H1 (cell line): ENCODE measurements at regions of chr4 and their contacts with region 1.

Region 1: GRCh38 chr4:10403633-10404445 is 53.4 kb downstream of the ZNF518B start:
- DNase-seq: peak in 1 of 2 experiments; percentile 1
- H3K4me3 ChIP-seq: no peak overlapping the region
- H3K27ac ChIP-seq: no peak overlapping the region
- H3K4me1 ChIP-seq: no peaks in the 10 kb centered on the region; a peak in 1 of 7 replicates
- H3K27me3 ChIP-seq: no peaks in the 10 kb centered on the region
- CTCF ChIP-seq: peak in 2 of 3 experiments; percentile 54 to 55; a peak in 2 of 4 replicates
- EP300 ChIP-seq: no peak
- POLR2A ChIP-seq: no peak
- RAD21 ChIP-seq: peak; percentile 81 to 86

Region 2: GRCh38 chr4:10157478-10158332 is 246.1 kb before region 1 on chr4:
- CTCF ChIA-PET with region 1: interaction called, 264 read pairs
- POLR2A ChIA-PET with region 1: no interaction called
- DNase-seq: peak; percentile 39 to 62
- H3K4me3 ChIP-seq: no peak overlapping the region
- H3K27ac ChIP-seq: no peak overlapping the region
- H3K4me1 ChIP-seq: peaks cover 0 to 5% (median 0%) of the 10 kb centered on the region in 4 experiments; a peak in 1 of 7 replicates
- H3K27me3 ChIP-seq: no peaks in the 10 kb centered on the region; a peak in 4 of 7 replicates
- CTCF ChIP-seq: peak; percentile 52 to 86 (median 73)
- EP300 ChIP-seq: no peak
- POLR2A ChIP-seq: no peak
- RAD21 ChIP-seq: peak; percentile 86 to 88

Region 3: GRCh38 chr4:10173037-10173753 is 230.6 kb before region 1 on chr4:
- CTCF ChIA-PET with region 1: interaction called, 25 read pairs
- POLR2A ChIA-PET with region 1: no interaction called
- DNase-seq: no peak
- H3K4me3 ChIP-seq: no peak overlapping the region
- H3K27ac ChIP-seq: no peak overlapping the region
- H3K4me1 ChIP-seq: no peaks in the 10 kb centered on the region; a peak in 2 of 7 replicates
- H3K27me3 ChIP-seq: no peaks in the 10 kb centered on the region
- CTCF ChIP-seq: peak in 1 of 3 experiments; percentile 16; a peak in 1 of 4 replicates
- EP300 ChIP-seq: no peak
- POLR2A ChIP-seq: no peak
- RAD21 ChIP-seq: 0 out of 4 replicates have a peak, but pooled peaks of 1 of the 2 experiments have one; percentile 9

Region 4: DNA sequence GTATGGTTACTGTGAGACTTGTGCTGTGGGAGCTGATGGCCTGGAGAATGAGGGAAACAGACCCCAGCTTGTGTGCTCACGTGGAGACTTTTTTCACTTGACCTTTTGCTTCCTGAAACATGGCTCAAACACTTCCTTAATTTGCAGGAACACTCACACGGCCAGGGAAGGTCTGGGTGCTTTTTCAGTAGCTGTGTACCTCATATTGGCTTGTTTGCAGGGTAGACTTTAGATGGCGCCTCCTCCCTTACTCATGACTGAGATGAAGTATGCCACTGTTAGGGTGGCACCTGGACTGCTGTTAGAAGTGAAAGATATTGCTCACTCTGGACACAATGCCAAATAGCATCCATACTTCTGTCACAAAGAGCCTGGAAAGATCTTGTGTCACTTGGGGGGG is 211.5 kb before region 1 on chr4:
- CTCF ChIA-PET with region 1: interaction called, 25 read pairs
- POLR2A ChIA-PET with region 1: no interaction called
- DNase-seq: no peak
- H3K4me3 ChIP-seq: no peak overlapping the region
- H3K27ac ChIP-seq: no peak overlapping the region
- H3K4me1 ChIP-seq: no peaks in the 10 kb centered on the region
- H3K27me3 ChIP-seq: no peaks in the 10 kb centered on the region
- CTCF ChIP-seq: peak in 2 of 3 experiments; percentile 31 to 43; a peak in 2 of 4 replicates
- EP300 ChIP-seq: no peak
- POLR2A ChIP-seq: no peak
- RAD21 ChIP-seq: peak; percentile 54 to 68

Region 5: DNA sequence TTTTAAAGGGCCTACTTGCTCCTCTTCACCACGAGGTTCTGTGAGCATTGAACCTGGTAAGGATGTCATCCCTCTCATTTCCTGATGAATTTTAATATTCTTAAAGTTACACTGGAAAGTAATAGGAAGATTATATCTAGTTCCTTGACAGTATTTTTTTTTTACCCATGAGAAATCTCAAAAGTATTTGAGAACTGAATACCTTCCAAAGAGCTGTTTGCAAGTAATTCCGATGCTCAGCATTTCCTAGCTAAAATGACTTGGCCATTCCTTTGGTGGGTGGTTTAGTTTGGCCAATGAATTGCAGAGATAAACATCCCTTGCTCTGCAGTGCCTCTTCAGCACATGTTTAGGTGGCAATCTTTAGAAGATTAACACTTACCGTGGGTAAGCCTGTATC is 177.1 kb before region 1 on chr4:
- CTCF ChIA-PET with region 1: no interaction called
- POLR2A ChIA-PET with region 1: no interaction called
- DNase-seq: no peak
- H3K4me3 ChIP-seq: no peak overlapping the region
- H3K27ac ChIP-seq: no peak overlapping the region
- H3K4me1 ChIP-seq: no peaks in the 10 kb centered on the region
- H3K27me3 ChIP-seq: no peaks in the 10 kb centered on the region
- CTCF ChIP-seq: no peak
- EP300 ChIP-seq: no peak
- POLR2A ChIP-seq: no peak
- RAD21 ChIP-seq: no peak

Region 6: DNA sequence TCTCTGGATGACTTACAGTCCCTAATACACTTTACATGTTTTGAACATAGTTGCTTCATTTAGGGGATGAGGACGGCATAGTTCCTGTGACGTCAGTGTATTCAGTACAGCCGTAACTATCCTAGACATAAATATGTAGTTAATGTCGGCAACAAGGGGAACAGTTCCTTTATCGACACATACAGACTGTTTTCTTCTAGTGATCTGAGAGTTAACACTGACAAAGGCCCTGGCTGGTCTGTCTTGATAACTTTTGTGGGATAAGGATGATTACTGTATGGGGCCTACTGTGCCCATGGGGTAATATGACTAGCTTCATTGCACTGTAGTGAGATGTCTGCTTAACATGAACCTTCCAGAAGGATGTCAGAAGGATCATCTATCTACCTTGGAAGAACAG is 77.8 kb before region 1 on chr4:
- CTCF ChIA-PET with region 1: no interaction called
- POLR2A ChIA-PET with region 1: no interaction called
- DNase-seq: no peak
- H3K4me3 ChIP-seq: no peak overlapping the region
- H3K27ac ChIP-seq: no peak overlapping the region
- H3K4me1 ChIP-seq: no peaks in the 10 kb centered on the region
- H3K27me3 ChIP-seq: no peaks in the 10 kb centered on the region
- CTCF ChIP-seq: no peak
- EP300 ChIP-seq: no peak
- POLR2A ChIP-seq: no peak
- RAD21 ChIP-seq: no peak

Region 7: DNA sequence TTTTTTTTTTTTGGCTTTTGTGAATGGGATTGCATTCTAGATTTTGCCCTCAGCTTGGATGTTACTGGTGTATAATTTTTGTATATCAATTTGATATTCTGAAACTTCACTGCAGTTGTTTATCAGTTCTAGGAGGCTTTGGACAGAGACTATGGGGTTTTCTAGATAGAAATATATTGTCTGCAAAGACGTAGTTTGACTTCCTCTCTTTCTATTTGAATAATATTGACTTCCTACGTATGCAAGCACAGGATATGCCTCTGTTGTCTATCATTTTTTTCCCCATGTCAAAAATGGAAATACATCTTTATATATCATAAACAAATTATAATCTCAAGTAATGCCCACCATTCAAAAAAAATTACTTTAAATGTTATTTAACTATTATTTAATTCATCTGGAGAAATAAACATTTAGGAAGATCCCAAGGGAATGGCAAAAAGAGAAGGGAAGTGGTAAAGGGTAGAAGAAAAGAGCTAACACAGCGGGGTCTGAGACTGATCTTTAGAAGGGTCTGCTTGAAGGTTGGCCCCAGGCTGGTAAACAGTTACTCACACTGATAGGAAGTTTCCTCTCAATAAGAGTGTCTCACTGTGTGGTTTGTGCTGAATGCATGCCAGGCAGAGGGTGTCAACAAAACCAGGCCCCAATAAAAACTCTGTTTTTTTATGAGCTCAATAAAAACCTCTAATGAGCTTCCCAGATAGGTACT is 17.7 kb after region 1 on chr4:
- CTCF ChIA-PET with region 1: interaction called, 13 read pairs
- POLR2A ChIA-PET with region 1: no interaction called
- DNase-seq: no peak
- H3K4me3 ChIP-seq: no peak overlapping the region
- H3K27ac ChIP-seq: no peak overlapping the region
- H3K4me1 ChIP-seq: no peaks in the 10 kb centered on the region
- H3K27me3 ChIP-seq: no peaks in the 10 kb centered on the region
- CTCF ChIP-seq: no peak
- EP300 ChIP-seq: no peak
- POLR2A ChIP-seq: no peak
- RAD21 ChIP-seq: no peak

Region 8: GRCh38 chr4:10535912-10536311 is 132.1 kb after region 1 on chr4:
- CTCF ChIA-PET with region 1: interaction called, 27 read pairs
- POLR2A ChIA-PET with region 1: no interaction called
- DNase-seq: no peak
- H3K4me3 ChIP-seq: no peak overlapping the region
- H3K27ac ChIP-seq: no peak overlapping the region
- H3K4me1 ChIP-seq: peaks cover 0 to 3% (median 2%) of the 10 kb centered on the region in 4 experiments; a peak in 3 of 7 replicates
- H3K27me3 ChIP-seq: no peaks in the 10 kb centered on the region
- CTCF ChIP-seq: no peak
- EP300 ChIP-seq: no peak
- POLR2A ChIP-seq: no peak
- RAD21 ChIP-seq: no peak

Region 9: DNA sequence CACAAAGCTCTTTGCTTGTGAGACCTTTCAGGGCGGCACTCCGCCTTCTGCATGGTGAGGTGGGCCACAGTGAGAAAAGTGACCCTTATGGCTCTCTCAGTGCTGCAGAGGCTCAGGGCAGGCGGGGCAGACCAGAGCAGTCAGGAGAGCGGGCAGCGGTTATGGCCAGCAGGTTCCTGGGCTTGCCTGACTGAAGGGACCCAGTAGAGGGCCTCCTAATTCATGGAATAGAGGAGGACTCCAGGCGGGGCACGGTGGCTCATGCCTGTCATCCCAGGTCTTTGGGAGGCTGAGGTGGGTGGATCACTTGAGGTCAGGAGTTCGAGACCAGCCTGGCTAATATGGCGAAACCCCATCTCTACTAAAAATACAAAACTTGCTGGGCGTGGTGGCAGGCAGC is 189.3 kb after region 1 on chr4:
- CTCF ChIA-PET with region 1: no interaction called
- POLR2A ChIA-PET with region 1: no interaction called
- DNase-seq: no peak
- H3K4me3 ChIP-seq: no peak overlapping the region
- H3K27ac ChIP-seq: no peak overlapping the region
- H3K4me1 ChIP-seq: peaks cover 0 to 10% (median under 1%) of the 10 kb centered on the region in 4 experiments; a peak in 2 of 7 replicates
- H3K27me3 ChIP-seq: 0 out of 7 replicates have a peak, but pooled peaks cover 0 to 2% (median 0%) of the 10 kb centered on the region in 4 experiments
- CTCF ChIP-seq: peak; percentile 13 to 32 (median 19); a peak in 3 of 4 replicates
- EP300 ChIP-seq: no peak
- POLR2A ChIP-seq: no peak
- RAD21 ChIP-seq: peak; percentile 46 to 64; a peak in 3 of 4 replicates

Region 10: GRCh38 chr4:10963958-10964703 is 560.3 kb after region 1 on chr4:
- CTCF ChIA-PET with region 1: no interaction called
- POLR2A ChIA-PET with region 1: no interaction called
- DNase-seq: no peak
- H3K4me3 ChIP-seq: 0 out of 8 replicates have a peak overlapping the region, but pooled peaks of 1 of the 4 experiments have one; percentile 0
- H3K27ac ChIP-seq: no peak overlapping the region
- H3K4me1 ChIP-seq: peaks cover 9 to 17% (median 13%) of the 10 kb centered on the region in 4 experiments
- H3K27me3 ChIP-seq: peaks cover 0 to 16% (median 7%) of the 10 kb centered on the region in 4 experiments; a peak in 4 of 7 replicates
- CTCF ChIP-seq: no peak
- EP300 ChIP-seq: no peak
- POLR2A ChIP-seq: no peak
- RAD21 ChIP-seq: 0 out of 4 replicates have a peak, but pooled peaks of 1 of the 2 experiments have one; percentile 8